Right ventricle myocardium superior (tissue), 1 donor: ENCODE measurements at regions of chr15 and their contacts with region 1.

Region 1: DNA sequence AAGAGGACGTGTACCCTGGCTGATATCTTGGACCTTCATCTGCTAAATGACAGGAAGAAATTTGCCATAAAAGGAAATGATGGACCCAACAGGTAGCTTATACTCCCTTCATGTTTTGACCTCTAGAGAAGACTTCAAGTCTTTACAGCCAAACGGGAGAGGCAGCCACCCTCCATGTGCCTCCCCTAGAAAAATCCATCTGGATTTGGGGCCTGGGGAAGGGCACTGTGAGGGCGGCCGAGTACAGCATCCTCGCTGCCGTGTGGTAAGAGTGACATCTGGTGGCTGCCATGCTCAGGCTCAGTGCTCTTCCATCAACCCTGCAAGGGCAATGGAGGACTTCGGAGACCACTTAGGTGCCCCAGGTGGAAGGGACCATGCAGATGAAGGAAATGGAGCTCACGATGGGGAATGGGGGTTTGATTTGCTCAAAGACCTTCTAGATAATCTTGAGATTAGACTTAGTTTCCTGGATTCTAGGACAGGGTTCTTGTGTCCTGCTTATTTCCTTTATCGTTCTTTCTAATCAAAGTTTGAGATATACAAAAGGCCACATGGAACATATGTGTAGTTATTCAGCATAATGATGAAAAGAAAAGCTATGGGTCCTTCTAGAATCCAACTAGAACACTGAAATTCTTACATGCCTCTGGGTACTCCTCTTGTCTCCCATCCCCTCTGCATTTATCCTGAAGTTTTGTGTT is 44.4 kb downstream of the AQP9 start:
- DNase-seq: peak; percentile 64
- ATAC-seq: peak; percentile 94

Region 2: GRCh38 chr15:56207092-56207491 is 1975.5 kb before region 1 on chr15:
- intact Hi-C with region 1: no loop called
- DNase-seq: no peak
- ATAC-seq: no peak

Region 3: DNA sequence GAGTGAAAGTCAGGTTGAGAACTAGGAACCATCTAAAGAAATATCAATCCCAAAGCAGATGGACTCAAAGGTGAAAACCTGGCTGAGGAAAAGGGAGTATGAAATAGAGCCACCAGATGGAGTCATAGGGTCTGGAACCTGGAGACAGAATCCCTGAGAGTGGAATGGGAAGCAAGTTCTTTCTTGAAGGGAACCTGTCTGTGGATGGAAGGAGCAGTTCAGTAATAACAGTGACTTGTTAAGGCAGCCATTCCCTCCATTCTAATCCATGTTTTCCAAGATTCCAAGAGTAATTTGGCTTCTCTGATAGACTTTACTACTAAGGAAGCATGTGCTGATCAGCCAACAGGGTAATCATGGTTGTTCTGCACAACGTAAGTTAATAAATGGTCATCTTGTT is 66.9 kb before region 1 on chr15:
- intact Hi-C with region 1: loop called (anchors 5 kb)
- DNase-seq: no peak
- ATAC-seq: no peak